Activated naive CD8-positive, alpha-beta T cell treated with anti-CD3 and anti-CD28 coated beads, Interleukin-2, amount 10 ng/mL, durations not matched to agents 7 days and 5 days (primary cell): ENCODE measurements at regions of chr9 and their contacts with region 1.

Region 1: GRCh38 chr9:129068990-129069861 is 11.7 kb upstream of the DOLPP1 start:
- DNase-seq: peak; percentile 80
- ATAC-seq: peak; percentile 94
- H3K4me3 Mint-ChIP-seq: peak overlapping the region; percentile 81
- H3K27ac Mint-ChIP-seq: peak overlapping the region; percentile 98
- H3K4me1 Mint-ChIP-seq: peaks cover 30% of the 10 kb centered on the region
- H3K27me3 Mint-ChIP-seq: no peaks in the 10 kb centered on the region

Region 2: GRCh38 chr9:128845155-128845931 is 223.9 kb before region 1 on chr9:
- POLR2A ChIA-PET with region 1: no interaction called
- DNase-seq: no peak
- ATAC-seq: no peak
- H3K4me3 Mint-ChIP-seq: no peak overlapping the region
- H3K27ac Mint-ChIP-seq: no peak overlapping the region
- H3K4me1 Mint-ChIP-seq: no peaks in the 10 kb centered on the region
- H3K27me3 Mint-ChIP-seq: no peaks in the 10 kb centered on the region

Region 3: DNA sequence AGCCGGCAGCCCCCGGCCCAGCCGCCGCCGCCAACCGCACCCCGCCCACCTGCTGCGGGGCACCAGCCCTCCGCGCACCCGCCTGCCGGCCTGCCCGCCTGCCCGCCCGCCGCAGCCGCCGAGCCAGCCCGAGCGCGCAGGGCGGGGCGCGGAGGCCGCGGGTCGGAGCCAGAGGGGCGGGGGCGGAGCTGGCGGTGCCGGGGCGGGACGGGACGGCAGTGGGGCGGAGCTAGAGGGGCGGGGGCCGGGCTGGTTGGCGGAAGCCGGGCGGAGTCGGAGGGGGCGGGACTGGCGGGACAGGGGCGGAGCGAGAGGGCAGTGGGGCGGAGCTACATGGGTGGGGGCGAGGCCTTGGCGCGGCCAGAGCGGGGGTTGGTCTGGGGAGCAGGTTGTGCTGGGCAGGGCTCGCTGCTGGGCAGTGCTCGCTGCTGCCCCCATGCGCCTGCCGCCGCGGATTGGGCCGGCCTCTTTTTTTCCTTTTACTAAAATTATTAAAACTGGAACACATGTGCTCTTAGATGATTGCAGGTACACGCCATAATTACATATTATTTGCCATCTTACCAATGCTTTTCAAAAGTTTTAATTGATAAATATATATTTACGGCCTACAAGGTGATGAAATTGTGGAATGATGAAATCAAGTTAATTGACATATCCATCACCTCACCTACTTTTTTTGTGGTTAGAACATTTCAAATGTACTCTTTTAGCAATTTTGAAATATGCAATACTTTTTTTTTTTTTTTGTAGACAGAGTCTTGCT is 40.9 kb before region 1 on chr9 and contains the start of gene SH3GLB2:
- POLR2A ChIA-PET with region 1: interaction called, 13 read pairs
- DNase-seq: peak; percentile 95
- ATAC-seq: peak; percentile 78
- H3K4me3 Mint-ChIP-seq: peak within 1 kb of the TSS; percentile 88
- H3K27ac Mint-ChIP-seq: peak within 1 kb of the TSS; percentile 84
- H3K4me1 Mint-ChIP-seq: peaks cover 16% of the 10 kb centered on the region
- H3K27me3 Mint-ChIP-seq: no peaks in the 10 kb centered on the region
- total RNA-seq, gene SH3GLB2: 98.7 to 104 TPM

Region 4: DNA sequence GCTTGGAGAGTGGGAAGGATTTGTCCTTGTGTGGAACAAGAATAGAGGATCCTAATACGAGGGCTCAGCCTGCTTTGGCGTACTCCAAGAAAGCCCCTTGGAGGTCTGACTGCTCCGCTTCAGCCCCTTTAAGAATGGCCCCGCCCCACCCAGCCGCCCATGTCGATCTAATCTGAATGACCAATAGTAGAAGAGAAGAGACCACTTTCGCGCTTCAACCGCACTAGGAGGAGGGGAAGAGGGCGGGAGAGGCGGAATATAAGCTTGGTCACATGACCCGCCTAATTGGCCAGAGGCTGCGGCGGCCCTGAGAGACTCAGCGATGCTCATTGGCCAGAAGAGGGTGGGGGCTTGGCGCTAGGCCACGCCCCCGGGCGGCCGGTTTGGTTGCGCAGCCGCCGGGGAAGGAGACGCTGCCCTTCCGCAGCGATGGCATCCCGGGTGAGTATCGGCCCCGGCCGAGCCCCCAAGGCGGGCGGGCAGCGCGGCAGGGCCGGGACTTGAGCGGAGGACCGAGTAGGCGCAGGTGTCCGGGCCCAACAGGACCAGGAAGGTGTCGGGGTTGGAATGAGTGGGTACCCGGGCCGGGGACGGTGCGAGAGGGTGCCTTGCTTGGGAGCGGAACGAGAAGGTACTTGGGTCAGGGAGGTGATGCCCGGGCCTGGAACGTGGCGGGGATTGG is 32.8 kb before region 1 on chr9 and contains the start of gene MIGA2:
- POLR2A ChIA-PET with region 1: interaction called, 10 read pairs
- DNase-seq: peak; percentile 94
- ATAC-seq: peak; percentile 98
- H3K4me3 Mint-ChIP-seq: peak within 1 kb of the TSS; percentile 95
- H3K27ac Mint-ChIP-seq: peak within 1 kb of the TSS; percentile 68
- H3K4me1 Mint-ChIP-seq: peaks cover 17% of the 10 kb centered on the region
- H3K27me3 Mint-ChIP-seq: no peaks in the 10 kb centered on the region
- total RNA-seq, gene MIGA2: 62.1 to 66.0 TPM

Region 5: DNA sequence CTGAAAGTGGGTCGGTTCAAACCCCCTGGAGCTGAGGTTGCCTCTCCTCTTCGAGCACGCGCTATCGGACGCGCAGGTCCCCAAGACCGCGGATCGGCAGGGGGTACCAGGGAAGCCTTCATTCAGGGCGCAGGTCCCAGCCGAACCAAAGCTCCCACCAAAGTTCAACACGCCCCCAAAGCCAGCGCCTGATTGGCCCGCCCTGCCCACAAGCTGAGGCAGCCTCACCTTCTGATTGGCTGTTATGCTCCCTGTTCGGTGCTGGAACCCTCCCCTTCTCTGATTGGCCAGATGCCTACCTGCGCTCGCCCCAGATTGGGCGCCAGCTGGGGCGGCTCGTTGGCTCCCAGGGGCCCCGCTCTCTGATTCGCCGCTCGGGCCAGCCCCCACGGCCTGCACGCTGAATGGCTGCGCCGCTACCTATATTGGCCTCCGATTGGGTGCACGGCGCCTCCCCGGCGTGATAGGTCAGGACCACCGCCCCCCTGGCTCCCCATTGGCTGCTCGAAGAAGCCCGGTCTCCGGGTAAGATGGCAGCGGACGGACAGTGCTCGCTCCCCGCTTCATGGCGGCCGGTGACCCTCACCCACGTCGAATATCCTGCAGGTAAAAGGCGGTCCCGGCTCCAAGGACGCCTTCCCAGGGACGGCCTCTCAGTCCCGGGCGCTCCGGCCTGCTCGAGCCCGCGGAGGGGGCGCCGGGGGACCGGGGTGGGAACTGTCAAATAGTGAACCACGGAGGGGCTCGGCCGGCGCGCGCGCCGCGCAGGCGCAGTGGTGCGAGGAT is 11.6 kb after region 1 on chr9 and contains the start of gene DOLPP1:
- POLR2A ChIA-PET with region 1: interaction called, 31 read pairs
- DNase-seq: peak; percentile 98
- ATAC-seq: peak; percentile 98
- H3K4me3 Mint-ChIP-seq: peak within 1 kb of the TSS; percentile 88
- H3K27ac Mint-ChIP-seq: peak within 1 kb of the TSS; percentile 77
- H3K4me1 Mint-ChIP-seq: peaks cover 17% of the 10 kb centered on the region
- H3K27me3 Mint-ChIP-seq: no peaks in the 10 kb centered on the region
- total RNA-seq, gene DOLPP1: 17.4 to 21.6 TPM